Activated CD8-positive, alpha-beta T cell treated with anti-CD3 and anti-CD28 coated beads, Interleukin-2, amount 10 ng/mL, durations not matched to agents 7 days and 5 days (primary cell): ENCODE measurements at regions of chr1 and their contacts with region 1.

Region 1: DNA sequence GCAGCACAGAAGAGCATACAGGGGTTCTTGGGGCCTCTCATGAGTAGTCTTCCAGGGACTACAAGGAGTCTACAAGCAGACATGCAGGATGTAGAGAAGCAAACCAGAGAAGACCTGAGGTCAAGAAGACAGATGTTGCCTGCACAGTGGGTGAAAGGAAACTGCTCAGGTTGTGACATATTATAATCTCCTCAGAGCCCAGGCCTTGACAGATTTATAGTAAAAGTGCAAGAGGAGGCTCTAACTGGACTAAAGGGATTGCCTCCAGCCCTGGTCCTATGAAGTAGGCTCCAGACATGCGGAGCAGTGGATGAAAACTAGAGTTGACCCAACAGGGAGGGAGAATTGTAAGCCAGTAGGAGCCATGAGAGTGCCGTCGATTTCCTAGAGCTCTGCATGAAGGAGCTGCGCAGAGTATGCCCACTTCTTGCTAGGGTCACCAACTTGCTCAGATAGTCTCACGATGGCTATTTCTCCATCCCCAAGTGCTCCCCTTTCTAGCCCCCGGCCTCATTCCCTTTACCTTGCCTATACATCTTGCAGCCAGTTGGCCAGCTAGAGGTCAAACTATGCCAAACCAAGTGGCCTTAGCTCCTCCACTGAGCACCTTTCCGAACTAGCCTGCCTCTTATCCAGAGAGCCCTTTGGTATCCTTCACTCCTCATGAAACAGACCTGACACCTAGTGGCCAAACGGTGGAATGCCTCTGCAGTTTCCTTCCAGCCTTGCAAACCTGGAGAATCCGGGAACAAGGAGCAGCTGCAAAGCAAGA is 36.2 kb upstream of the IPO9 start:
- DNase-seq: peak; percentile 65
- ATAC-seq: peak; percentile 78
- H3K4me3 Mint-ChIP-seq: no peak overlapping the region
- H3K27ac Mint-ChIP-seq: no peak overlapping the region
- H3K4me1 Mint-ChIP-seq: peaks cover 24% of the 10 kb centered on the region
- H3K27me3 Mint-ChIP-seq: peaks cover under 1% of the 10 kb centered on the region

Region 2: GRCh38 chr1:201536543-201536942 is 256.2 kb before region 1 on chr1:
- CTCF ChIA-PET with region 1: interaction called, 12 read pairs
- POLR2A ChIA-PET with region 1: no interaction called
- DNase-seq: no peak
- ATAC-seq: no peak
- H3K4me3 Mint-ChIP-seq: no peak overlapping the region
- H3K27ac Mint-ChIP-seq: no peak overlapping the region
- H3K4me1 Mint-ChIP-seq: peaks cover 13% of the 10 kb centered on the region
- H3K27me3 Mint-ChIP-seq: peaks cover 53% of the 10 kb centered on the region

Region 3: DNA sequence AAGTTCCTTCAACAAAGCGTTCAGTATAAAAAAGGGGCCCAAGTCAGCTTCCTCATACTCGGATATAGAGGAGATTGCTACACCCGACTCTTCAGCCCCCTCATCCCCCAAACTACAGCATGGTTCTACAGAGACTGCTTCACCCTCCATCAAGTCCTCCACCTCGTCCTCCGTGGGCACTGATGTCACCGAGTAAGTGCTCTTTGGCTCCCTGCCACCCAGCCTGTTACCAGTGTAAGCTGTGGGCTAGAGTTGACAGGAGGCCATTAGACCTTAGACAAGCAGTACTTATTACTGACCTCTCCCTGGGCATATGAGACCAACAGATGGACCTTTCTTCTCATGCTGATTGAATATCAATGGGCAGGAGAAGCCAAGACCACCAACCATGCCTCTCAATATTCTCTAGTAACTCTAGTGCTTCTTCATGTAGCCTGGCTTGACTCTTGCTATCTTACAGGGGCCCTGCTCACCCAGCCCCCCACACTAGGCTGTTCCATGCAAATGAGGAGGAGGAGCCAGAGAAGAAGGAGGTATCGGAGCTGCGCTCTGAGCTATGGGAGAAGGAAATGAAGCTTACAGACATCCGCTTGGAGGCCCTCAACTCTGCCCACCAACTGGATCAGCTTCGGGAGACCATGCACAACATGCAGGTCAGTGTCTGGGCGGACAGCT is 15.4 kb after region 1 on chr1:
- CTCF ChIA-PET with region 1: interaction called, 22 read pairs
- POLR2A ChIA-PET with region 1: no interaction called
- DNase-seq: no peak
- ATAC-seq: no peak
- H3K4me3 Mint-ChIP-seq: no peak overlapping the region
- H3K27ac Mint-ChIP-seq: no peak overlapping the region
- H3K4me1 Mint-ChIP-seq: no peaks in the 10 kb centered on the region
- H3K27me3 Mint-ChIP-seq: no peaks in the 10 kb centered on the region

Region 4: GRCh38 chr1:201937624-201938213 is 145.0 kb after region 1 on chr1:
- CTCF ChIA-PET with region 1: no interaction called
- POLR2A ChIA-PET with region 1: no interaction called
- DNase-seq: no peak
- ATAC-seq: no peak
- H3K4me3 Mint-ChIP-seq: no peak overlapping the region
- H3K27ac Mint-ChIP-seq: no peak overlapping the region
- H3K4me1 Mint-ChIP-seq: no peaks in the 10 kb centered on the region
- H3K27me3 Mint-ChIP-seq: peaks cover 28% of the 10 kb centered on the region